Heart right ventricle (tissue), 16 donors: ENCODE measurements at regions of chr5 and their contacts with region 1.

Region 1: GRCh38 chr5:56286015-56286884 is 53.1 kb upstream of the ANKRD55 start:
- DNase-seq: no peak
- ATAC-seq: no peak
- H3K4me3 ChIP-seq: no peak overlapping the region
- H3K27ac ChIP-seq: no peak overlapping the region
- H3K4me1 ChIP-seq: peaks cover 3 to 25% (median 14%) of the 10 kb centered on the region in 9 donors
- H3K27me3 ChIP-seq: no peaks in the 10 kb centered on the region
- CTCF ChIP-seq: no peak

Region 2: DNA sequence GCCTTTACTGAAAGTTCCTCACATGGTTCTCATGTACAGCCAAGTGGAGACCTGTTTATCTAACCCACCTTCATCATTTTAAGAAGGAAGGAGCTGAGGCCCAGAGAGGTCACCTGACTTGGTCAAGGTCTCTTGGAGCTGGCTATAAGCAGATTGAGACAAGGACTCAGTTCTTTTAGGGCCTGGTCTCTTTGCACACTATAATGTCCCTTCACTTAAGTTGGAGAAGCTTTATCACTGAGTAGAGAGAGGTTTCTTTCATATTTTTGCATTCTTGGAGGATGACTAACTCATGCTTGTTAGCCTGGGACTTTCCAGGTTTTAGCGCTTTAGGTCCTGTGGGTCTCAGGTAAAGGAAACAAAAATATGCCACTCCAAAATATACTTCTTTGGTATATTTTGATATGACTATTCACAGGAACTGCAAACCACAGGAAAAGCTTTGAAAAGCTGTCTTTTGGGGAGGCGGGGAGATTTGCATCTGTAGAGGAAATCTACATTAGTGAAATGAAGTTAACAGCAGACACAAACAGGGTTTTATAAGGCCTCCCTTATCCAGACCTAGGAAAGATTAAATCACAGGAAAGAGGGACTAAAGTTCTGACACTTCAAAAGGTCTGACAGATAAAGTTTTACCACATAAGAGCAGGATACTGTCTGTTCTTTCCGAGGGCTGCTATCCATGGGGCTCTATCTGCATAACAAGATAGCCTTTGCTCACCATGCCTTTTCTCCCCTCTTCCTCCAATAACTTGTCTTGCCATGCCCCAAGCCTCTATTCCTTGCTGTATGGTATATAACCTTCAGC is 42.7 kb after region 1 on chr5:
- intact Hi-C with region 1: loop called in 1 of 10 experiments (anchors 5 kb)
- DNase-seq: no peak
- ATAC-seq: no peak
- H3K4me3 ChIP-seq: no peak overlapping the region
- H3K27ac ChIP-seq: peak overlapping the region in 2 of 10 donors; percentile 21 to 41
- H3K4me1 ChIP-seq: peaks cover 0 to 34% (median 12%) of the 10 kb centered on the region in 9 donors
- H3K27me3 ChIP-seq: no peaks in the 10 kb centered on the region
- CTCF ChIP-seq: no peak